ENCODE measurements at regions of chr12 and their contacts with region 1.

Region 1: DNA sequence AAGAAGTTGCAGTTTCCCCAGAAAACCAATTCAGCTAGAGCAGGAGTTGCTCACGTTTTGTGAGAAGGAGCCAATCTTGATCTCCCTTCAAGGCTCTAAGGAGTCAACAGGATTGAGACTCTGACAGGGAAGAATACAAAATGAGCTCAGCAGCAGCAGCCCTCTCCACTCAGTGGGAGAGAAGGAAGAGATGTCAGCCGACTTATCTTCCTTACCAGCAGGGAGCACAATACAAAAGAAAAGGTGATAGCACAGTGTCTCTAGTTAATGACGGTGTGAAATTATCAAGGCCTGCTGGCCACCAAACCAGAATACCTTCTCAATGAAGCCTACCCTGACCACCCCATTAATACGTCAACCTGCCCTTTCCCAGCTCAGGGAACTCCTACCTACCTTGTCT is 223.6 kb upstream of the TMPO start:
- DNase-seq: no peak
- H3K4me3 ChIP-seq: no peak overlapping the region
- H3K27ac ChIP-seq: no peak overlapping the region
- H3K4me1 ChIP-seq: no peaks in the 10 kb centered on the region
- H3K27me3 ChIP-seq: peaks cover 74% of the 10 kb centered on the region
- CTCF ChIP-seq: no peak

Region 2: GRCh38 chr12:97813301-97813700 is 478.5 kb before region 1 on chr12:
- CTCF ChIA-PET with region 1: no interaction called
- POLR2A ChIA-PET with region 1: no interaction called
- intact Hi-C with region 1: no loop called
- DNase-seq: no peak
- H3K4me3 ChIP-seq: no peak overlapping the region
- H3K27ac ChIP-seq: no peak overlapping the region
- H3K4me1 ChIP-seq: no peaks in the 10 kb centered on the region
- H3K27me3 ChIP-seq: peaks cover 18% of the 10 kb centered on the region
- CTCF ChIP-seq: no peak

Region 3: GRCh38 chr12:98274430-98275130 is 17.2 kb before region 1 on chr12:
- CTCF ChIA-PET with region 1: no interaction called
- POLR2A ChIA-PET with region 1: no interaction called
- intact Hi-C with region 1: loop called (anchors 1 kb)
- DNase-seq: peak; percentile 43
- H3K4me3 ChIP-seq: no peak overlapping the region
- H3K27ac ChIP-seq: no peak overlapping the region
- H3K4me1 ChIP-seq: peaks cover 3% of the 10 kb centered on the region
- H3K27me3 ChIP-seq: no peaks in the 10 kb centered on the region
- CTCF ChIP-seq: no peak

Measured in A673 (cell line).